CD4-positive, alpha-beta memory T cell (primary cell): ENCODE measurements at regions of chr17 and their contacts with region 1.

Region 1: GRCh38 chr17:75515496-75516254 is at the start of gene CASKIN2:
- DNase-seq: peak; percentile 68 to 74 (median 70)
- H3K4me3 ChIP-seq: peak within 1 kb of the TSS; percentile 69 to 74
- H3K4me3 Mint-ChIP-seq: peak within 1 kb of the TSS; percentile 70 to 84 (median 80)
- H3K27ac ChIP-seq: no peak within 1 kb of the TSS
- H3K27ac Mint-ChIP-seq: peak within 1 kb of the TSS in 6 of 7 donors; percentile 19 to 75 (median 52)
- H3K4me1 ChIP-seq: peaks cover 29% of the 10 kb centered on the region
- H3K4me1 Mint-ChIP-seq: peaks cover 16 to 31% (median 19%) of the 10 kb centered on the region in 4 donors
- H3K27me3 ChIP-seq: no peaks in the 10 kb centered on the region
- H3K27me3 Mint-ChIP-seq: no peaks in the 10 kb centered on the region
- total RNA-seq, gene CASKIN2: 0.32 to 0.53 TPM

Region 2: DNA sequence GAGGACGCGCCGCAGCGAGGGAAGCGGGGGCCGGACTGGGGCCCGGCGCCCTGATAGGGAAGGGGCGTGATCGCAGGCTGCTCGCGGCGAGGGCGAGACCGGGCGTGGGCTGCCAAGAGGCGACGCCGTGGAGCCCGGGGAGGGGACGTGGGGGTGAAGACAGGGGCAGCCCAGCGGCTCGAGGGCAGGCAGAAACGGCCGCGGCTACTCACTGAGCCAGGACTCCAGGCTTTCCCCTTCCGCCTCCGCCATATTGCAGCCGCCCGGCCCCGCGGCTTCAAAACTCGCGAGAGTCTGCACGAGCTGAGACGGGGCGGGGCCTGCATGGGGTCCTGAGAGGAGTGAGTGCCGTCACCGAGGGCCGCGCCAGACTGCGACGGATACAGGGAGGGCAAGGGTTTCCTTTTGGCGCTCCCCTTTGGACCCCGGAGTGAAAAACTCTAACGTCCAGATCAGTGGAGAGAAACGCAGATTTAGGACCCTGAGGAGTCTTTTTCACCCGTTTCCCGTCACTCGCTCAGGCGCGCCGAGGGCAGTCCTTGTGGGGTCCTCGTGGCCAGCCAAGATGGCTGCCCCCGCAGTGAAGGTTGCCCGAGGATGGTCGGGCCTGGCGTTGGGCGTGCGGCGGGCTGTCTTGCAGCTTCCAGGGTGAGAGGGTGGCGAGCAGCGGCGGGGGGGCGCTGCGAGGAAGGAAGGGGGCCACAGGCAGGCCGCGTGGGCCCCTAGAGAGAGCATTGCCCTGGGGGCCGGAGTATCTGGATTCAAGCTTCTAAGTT is 254.2 kb before region 1 on chr17 and contains the starts of genes GGA3 and MRPS7:
- CTCF ChIA-PET with region 1: no interaction called
- POLR2A ChIA-PET with region 1: interaction called, 12 read pairs
- intact Hi-C with region 1: no loop called
- DNase-seq: peak; percentile 95 to 99 (median 97)
- H3K4me3 ChIP-seq: peak within 1 kb of the TSS; percentile 77 to 99
- H3K4me3 Mint-ChIP-seq: peak within 1 kb of the TSS; percentile 93 to 99 (median 97)
- H3K27ac ChIP-seq: peak within 1 kb of the TSS; percentile 96
- H3K27ac Mint-ChIP-seq: peak within 1 kb of the TSS; percentile 100
- H3K4me1 ChIP-seq: peaks cover 35% of the 10 kb centered on the region
- H3K4me1 Mint-ChIP-seq: peaks cover 32 to 65% (median 48%) of the 10 kb centered on the region in 4 donors
- H3K27me3 ChIP-seq: no peaks in the 10 kb centered on the region
- H3K27me3 Mint-ChIP-seq: no peaks in the 10 kb centered on the region
- total RNA-seq, gene GGA3: 121 to 122 TPM
- total RNA-seq, gene MRPS7: 34.1 to 36.3 TPM

Region 3: GRCh38 chr17:75393523-75394331 is 121.9 kb before region 1 on chr17:
- CTCF ChIA-PET with region 1: no interaction called
- POLR2A ChIA-PET with region 1: interaction called, 12 read pairs
- intact Hi-C with region 1: no loop called
- DNase-seq: peak; percentile 66 to 86 (median 75)
- H3K4me3 ChIP-seq: peak overlapping the region; percentile 30 to 60
- H3K4me3 Mint-ChIP-seq: peak overlapping the region; percentile 90 to 97 (median 95)
- H3K27ac ChIP-seq: peak overlapping the region; percentile 66
- H3K27ac Mint-ChIP-seq: peak overlapping the region; percentile 71 to 96 (median 89)
- H3K4me1 ChIP-seq: peaks cover 78% of the 10 kb centered on the region
- H3K4me1 Mint-ChIP-seq: peaks cover 63 to 88% (median 72%) of the 10 kb centered on the region in 4 donors
- H3K27me3 ChIP-seq: no peaks in the 10 kb centered on the region
- H3K27me3 Mint-ChIP-seq: no peaks in the 10 kb centered on the region

Region 4: DNA sequence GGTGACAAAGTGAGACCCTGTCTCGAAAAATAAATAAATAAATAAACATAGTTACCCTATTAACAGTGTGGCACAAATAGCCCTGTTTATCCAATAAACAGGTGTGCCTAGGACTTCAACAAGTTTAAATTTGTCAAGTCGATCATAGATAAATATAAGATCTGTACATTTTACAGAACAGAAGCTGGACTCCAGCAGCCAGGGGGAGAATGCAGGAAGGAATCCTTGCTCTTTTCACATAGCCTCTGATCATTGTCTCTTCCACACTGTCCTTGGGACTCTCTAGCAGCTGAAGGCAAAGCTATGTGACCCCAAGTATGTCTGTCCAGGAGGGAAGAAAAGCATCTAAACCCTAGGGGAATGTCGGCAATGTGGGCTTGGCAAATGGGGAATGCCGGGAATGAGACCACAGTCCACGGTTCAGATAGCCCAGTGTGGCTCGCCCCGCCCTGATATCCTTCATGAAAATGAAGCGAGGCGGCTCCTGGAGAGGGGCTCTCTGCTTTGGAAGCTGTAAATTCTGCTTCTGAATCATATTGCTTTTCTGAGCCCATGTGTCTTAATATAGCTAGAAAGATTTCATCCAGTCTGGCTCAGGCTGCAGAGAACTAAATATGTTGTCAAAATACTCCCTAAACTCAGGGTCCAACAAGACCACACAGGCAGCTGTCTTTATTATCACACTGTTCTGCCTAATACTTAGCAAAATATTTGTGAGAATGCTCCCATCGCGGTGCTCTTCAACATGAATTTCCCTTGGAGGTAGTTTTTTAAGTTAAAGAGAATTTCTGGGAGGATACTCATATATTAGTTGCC is 85.3 kb before region 1 on chr17:
- CTCF ChIA-PET with region 1: interaction called, 6 read pairs
- POLR2A ChIA-PET with region 1: interaction called, 5 read pairs
- intact Hi-C with region 1: loop called (anchors 1 kb)
- DNase-seq: no peak
- H3K4me3 ChIP-seq: no peak overlapping the region
- H3K4me3 Mint-ChIP-seq: no peak overlapping the region
- H3K27ac ChIP-seq: no peak overlapping the region
- H3K27ac Mint-ChIP-seq: peak overlapping the region in 1 of 7 donors; percentile 47
- H3K4me1 ChIP-seq: peaks cover 15% of the 10 kb centered on the region
- H3K4me1 Mint-ChIP-seq: peaks cover 10 to 20% (median 15%) of the 10 kb centered on the region in 4 donors
- H3K27me3 ChIP-seq: no peaks in the 10 kb centered on the region
- H3K27me3 Mint-ChIP-seq: peaks cover 0 to 9% of the 10 kb centered on the region in 2 donors

Region 5: GRCh38 chr17:75456417-75457046 is 59.1 kb before region 1 on chr17 and contains the start of gene TMEM94:
- CTCF ChIA-PET with region 1: interaction called, 24 read pairs
- POLR2A ChIA-PET with region 1: interaction called, 26 read pairs
- intact Hi-C with region 1: loop called (anchors 1 kb)
- DNase-seq: peak; percentile 90 to 94 (median 92)
- H3K4me3 ChIP-seq: peak within 1 kb of the TSS; percentile 94 to 95
- H3K4me3 Mint-ChIP-seq: peak within 1 kb of the TSS; percentile 93 to 99 (median 95)
- H3K27ac ChIP-seq: peak within 1 kb of the TSS; percentile 67
- H3K27ac Mint-ChIP-seq: peak within 1 kb of the TSS; percentile 90 to 98 (median 96)
- H3K4me1 ChIP-seq: peaks cover 18% of the 10 kb centered on the region
- H3K4me1 Mint-ChIP-seq: peaks cover 20 to 35% (median 30%) of the 10 kb centered on the region in 4 donors
- H3K27me3 ChIP-seq: no peaks in the 10 kb centered on the region
- H3K27me3 Mint-ChIP-seq: no peaks in the 10 kb centered on the region
- total RNA-seq, gene TMEM94: 109 TPM

Region 6: GRCh38 chr17:75535119-75535537 is 19.5 kb after region 1 on chr17:
- CTCF ChIA-PET with region 1: interaction called, 11 read pairs
- POLR2A ChIA-PET with region 1: interaction called, 18 read pairs
- intact Hi-C with region 1: no loop called
- DNase-seq: peak; percentile 48 to 69 (median 59)
- H3K4me3 ChIP-seq: peak overlapping the region in 1 of 2 donors; percentile 7
- H3K4me3 Mint-ChIP-seq: peak overlapping the region; percentile 48 to 82 (median 73)
- H3K27ac ChIP-seq: peak overlapping the region; percentile 53
- H3K27ac Mint-ChIP-seq: peak overlapping the region; percentile 84 to 96 (median 94)
- H3K4me1 ChIP-seq: peaks cover 25% of the 10 kb centered on the region
- H3K4me1 Mint-ChIP-seq: peaks cover 11 to 34% (median 21%) of the 10 kb centered on the region in 4 donors
- H3K27me3 ChIP-seq: no peaks in the 10 kb centered on the region
- H3K27me3 Mint-ChIP-seq: no peaks in the 10 kb centered on the region

Region 7: DNA sequence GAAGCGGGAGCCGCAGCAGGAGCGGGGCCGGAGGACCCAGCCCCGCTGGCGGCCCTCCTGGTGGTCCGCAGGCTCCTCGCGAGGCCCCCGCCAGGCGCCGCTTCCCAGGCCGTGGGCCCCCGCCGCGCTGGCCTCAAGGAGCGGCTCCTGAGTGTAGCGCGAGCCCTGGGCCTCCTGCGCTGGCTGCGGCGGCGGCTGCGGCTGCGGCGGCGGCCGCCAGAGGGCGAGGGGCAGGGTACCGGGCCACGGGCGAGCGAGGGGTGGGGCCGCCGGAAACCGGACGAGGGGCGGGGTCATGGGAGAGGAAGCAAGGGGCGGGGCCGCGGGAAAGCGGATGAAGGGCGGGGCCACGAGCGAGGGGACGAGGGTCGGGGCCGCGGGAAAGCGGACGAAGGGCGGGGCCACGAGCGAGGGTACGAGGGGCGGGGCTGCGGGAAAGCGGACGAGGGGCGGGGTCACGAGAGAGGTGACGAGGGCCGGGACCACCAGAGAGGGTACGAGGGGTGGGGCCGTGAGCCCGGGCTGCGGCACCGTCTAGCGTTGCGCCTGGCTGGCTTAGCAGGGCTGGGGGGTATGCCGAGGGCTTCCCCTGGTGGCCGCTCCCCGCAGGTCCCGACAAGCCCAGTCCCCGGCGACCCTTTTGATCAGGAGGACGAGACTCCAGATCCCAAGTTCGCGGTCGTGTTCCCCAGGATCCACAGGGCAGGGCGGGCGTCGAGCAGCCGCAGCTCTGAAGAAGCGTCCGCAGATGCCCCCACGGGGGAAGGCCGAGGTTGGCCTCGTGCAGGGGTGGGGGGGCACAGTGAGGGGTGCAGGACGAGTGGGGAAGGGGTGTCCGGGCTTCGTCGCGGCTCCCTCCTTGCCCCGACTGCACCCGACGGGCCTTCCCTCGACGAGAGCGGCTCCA is 73.6 kb after region 1 on chr17:
- CTCF ChIA-PET with region 1: interaction called, 6 read pairs
- POLR2A ChIA-PET with region 1: interaction called, 22 read pairs
- intact Hi-C with region 1: loop called (anchors 1 kb)
- DNase-seq: peak; percentile 85 to 93 (median 92)
- H3K4me3 ChIP-seq: peak overlapping the region in 1 of 2 donors; percentile 41
- H3K4me3 Mint-ChIP-seq: peak overlapping the region; percentile 68 to 83 (median 78)
- H3K27ac ChIP-seq: no peak overlapping the region
- H3K27ac Mint-ChIP-seq: peak overlapping the region in 5 of 7 donors; percentile 57 to 88 (median 86)
- H3K4me1 ChIP-seq: peaks cover 18% of the 10 kb centered on the region
- H3K4me1 Mint-ChIP-seq: peaks cover 0 to 6% (median 3%) of the 10 kb centered on the region in 4 donors
- H3K27me3 ChIP-seq: no peaks in the 10 kb centered on the region
- H3K27me3 Mint-ChIP-seq: peaks cover 0 to 4% of the 10 kb centered on the region in 2 donors

Region 8: GRCh38 chr17:75679706-75680442 is 164.2 kb after region 1 on chr17:
- CTCF ChIA-PET with region 1: no interaction called
- POLR2A ChIA-PET with region 1: no interaction called
- intact Hi-C with region 1: no loop called
- DNase-seq: no peak
- H3K4me3 ChIP-seq: no peak overlapping the region
- H3K4me3 Mint-ChIP-seq: no peak overlapping the region
- H3K27ac ChIP-seq: no peak overlapping the region
- H3K27ac Mint-ChIP-seq: peak overlapping the region in 2 of 7 donors; percentile 9 to 23
- H3K4me1 ChIP-seq: peaks cover 4% of the 10 kb centered on the region
- H3K4me1 Mint-ChIP-seq: peaks cover 14 to 27% (median 19%) of the 10 kb centered on the region in 4 donors
- H3K27me3 ChIP-seq: no peaks in the 10 kb centered on the region
- H3K27me3 Mint-ChIP-seq: no peaks in the 10 kb centered on the region

Region 9: GRCh38 chr17:76612977-76613851 is 1097.5 kb after region 1 on chr17:
- CTCF ChIA-PET with region 1: no interaction called
- POLR2A ChIA-PET with region 1: no interaction called
- intact Hi-C with region 1: no loop called
- DNase-seq: no peak
- H3K4me3 ChIP-seq: no peak overlapping the region
- H3K4me3 Mint-ChIP-seq: no peak overlapping the region
- H3K27ac ChIP-seq: no peak overlapping the region
- H3K27ac Mint-ChIP-seq: peak overlapping the region in 2 of 7 donors; percentile 22
- H3K4me1 ChIP-seq: no peaks in the 10 kb centered on the region
- H3K4me1 Mint-ChIP-seq: peaks cover 0 to 7% (median 2%) of the 10 kb centered on the region in 4 donors
- H3K27me3 ChIP-seq: no peaks in the 10 kb centered on the region
- H3K27me3 Mint-ChIP-seq: peaks cover 3 to 4% of the 10 kb centered on the region in 2 donors